BJ (cell line): ENCODE measurements at regions of chr2 and their contacts with region 1.

Region 1: DNA sequence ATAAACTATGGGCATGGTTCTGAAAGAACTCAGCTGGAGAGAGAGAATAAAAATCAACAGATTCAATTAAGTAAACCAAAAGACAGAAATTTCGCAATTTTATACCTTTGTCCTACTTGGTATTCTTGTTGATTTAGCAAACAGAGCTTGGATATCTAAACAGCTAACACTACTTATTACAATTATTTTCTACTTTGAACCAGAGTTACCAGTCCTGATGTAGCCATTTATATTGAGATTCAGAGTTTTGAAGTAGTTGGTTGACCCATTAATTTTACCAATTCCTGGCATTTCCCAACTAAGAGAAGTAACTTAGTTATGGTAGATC is 48.9 kb downstream of the ASXL2 start:
- DNase-seq: no peak
- H3K4me3 ChIP-seq: no peak overlapping the region
- H3K27me3 ChIP-seq: no peaks in the 10 kb centered on the region
- CTCF ChIP-seq: no peak

Region 2: GRCh38 chr2:25673300-25674076 is 155.9 kb before region 1 on chr2 and contains the start of gene DTNB:
- CTCF ChIA-PET with region 1: no interaction called
- POLR2A ChIA-PET with region 1: no interaction called
- DNase-seq: no peak
- H3K4me3 ChIP-seq: peak within 1 kb of the TSS; percentile 55
- H3K27me3 ChIP-seq: no peaks in the 10 kb centered on the region
- CTCF ChIP-seq: no peak
- polyA plus RNA-seq, gene DTNB: 7.7 and 9.2 TPM in 2 replicates

Region 3: DNA sequence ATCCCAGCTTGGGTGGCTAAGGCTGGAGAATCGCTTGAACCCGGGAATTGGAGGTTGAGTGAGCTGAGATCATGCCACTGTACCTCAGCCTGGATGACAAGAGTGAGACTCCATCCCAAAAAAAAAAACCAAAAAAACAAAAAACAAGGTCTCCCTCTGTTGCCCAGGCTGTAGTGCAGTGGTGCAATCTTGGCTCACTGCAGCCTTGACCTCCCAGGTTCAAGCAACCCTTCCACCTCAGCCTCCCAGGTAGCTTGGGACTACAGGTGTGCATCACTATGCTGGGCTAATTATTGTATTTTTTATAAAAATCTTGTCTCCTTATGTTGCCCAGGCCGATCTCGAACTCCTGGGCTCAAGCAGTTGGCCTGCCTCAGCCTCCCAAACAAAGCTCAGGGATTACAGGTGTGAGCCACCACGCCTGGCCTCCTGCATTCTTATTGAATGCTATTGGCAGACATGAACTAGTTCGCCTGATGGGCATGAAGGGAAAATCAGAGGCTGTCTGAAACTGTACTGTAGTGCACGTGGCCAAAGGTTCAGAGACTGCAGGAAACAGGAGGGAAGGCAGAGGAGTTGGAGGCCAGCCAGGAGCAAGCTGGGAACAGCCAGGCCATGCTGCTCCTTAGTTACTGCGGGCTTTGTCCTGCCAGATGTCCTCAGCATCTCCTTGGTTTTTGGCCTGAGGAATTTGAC is 64.9 kb after region 1 on chr2:
- CTCF ChIA-PET with region 1: no interaction called
- POLR2A ChIA-PET with region 1: no interaction called
- DNase-seq: no peak
- H3K4me3 ChIP-seq: no peak overlapping the region
- H3K27me3 ChIP-seq: 0 out of 2 replicates have a peak, but pooled peaks cover 2% of the 10 kb centered on the region
- CTCF ChIP-seq: no peak

Region 4: GRCh38 chr2:26782876-26783704 is 953.7 kb after region 1 on chr2:
- CTCF ChIA-PET with region 1: no interaction called
- POLR2A ChIA-PET with region 1: interaction called, 10 read pairs
- DNase-seq: no peak
- H3K4me3 ChIP-seq: no peak overlapping the region
- H3K27me3 ChIP-seq: no peaks in the 10 kb centered on the region
- CTCF ChIP-seq: no peak